ENCODE measurements at regions of chr12 and their contacts with region 1.

Region 1: DNA sequence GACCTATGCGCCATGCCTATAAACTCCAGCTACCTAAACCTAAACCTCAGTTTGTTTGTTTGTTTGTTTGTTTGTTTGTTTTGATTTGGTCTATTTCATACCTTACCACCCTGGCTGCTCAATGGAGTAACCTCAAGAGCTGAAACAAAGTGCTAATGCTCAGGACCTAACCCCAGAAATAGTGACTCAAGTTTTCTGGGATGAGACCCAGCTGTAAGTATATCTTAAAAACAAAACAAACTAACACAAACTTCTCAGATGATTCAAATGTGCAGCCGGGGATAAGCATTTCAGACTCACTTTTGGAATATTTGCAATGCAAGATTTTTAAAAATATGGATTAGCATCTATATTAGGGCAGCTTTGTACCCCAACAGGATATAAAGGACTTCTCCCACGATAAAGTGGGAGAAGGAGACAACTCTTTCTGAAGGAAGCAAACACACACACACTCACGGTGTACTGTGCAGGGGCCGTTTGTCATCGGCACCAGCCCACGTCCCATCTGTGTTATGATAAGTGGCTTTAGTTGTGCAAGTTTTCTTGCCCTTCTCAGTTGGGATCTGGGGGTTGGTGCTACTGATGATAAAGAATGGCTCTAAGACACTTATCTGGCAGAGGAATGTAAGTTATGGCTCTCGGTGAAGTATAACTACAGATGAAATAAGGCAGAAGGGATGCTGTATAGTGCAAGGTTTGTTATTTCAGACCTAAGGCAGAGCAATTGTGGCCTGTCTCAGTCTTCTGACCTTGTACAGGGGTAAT is 516.7 kb upstream of the TMEM132C start:
- DNase-seq: peak in 4 of 10 donors; percentile 60 to 76 (median 67)
- H3K4me3 ChIP-seq: no peak overlapping the region
- H3K27ac ChIP-seq: peak overlapping the region in 26 of 59 donors; percentile 5 to 74 (median 39)
- H3K27me3 ChIP-seq: no peaks in the 10 kb centered on the region
- CTCF ChIP-seq: no peak

Region 2: DNA sequence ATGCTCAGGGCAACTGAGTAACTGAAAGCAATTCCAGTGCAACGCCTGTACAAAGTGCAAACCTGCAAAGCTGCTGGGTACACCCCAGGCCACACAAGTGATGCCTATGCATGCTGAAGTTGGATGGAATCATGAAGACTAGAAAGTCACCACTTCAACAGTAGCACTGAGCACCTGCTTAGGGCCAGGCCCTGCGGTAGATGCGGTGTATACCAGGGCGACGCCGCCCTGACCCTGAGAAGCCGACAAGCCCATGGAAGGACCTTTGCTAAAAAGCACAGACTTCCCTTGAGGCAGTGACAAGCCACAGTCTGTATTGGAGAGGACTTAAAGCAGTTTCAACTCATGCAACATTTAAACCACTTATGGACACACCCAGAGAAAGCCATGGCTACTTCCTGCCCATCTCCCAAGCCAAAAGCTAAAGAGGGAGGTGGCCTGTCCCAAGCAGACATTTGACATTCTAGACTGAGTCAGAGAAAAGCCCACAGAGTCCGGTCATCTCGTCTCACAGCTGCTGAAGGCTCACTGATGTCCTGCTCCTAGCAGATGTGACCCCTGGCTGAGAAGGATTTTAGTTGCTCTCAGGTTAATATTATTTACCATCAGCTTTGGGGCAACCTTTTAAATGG is 327.2 kb before region 1 on chr12:
- intact Hi-C with region 1: no loop called
- DNase-seq: no peak
- H3K4me3 ChIP-seq: no peak overlapping the region
- H3K27ac ChIP-seq: no peak overlapping the region
- H3K27me3 ChIP-seq: peaks cover 0 to 5% (median 0%) of the 10 kb centered on the region in 45 donors
- CTCF ChIP-seq: no peak

Region 3: DNA sequence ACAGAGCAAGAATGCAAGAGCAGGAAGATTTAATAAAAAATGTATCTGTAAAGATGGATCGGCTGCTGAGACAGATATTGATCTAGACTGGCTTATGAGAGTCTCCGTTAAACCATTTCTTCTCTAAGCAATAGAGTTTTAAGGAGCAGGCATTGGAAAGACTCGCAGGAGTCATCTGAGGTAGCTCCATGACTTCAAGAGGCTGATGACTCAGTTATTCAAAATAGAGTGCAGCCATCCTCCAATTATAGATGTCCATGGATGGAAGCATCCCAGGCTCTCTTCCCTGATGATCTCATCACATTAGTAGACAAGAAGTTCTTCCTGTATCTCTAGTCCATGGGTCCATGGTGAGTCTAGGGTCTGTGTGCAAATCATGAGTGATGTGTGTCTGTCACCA is 121.6 kb before region 1 on chr12:
- intact Hi-C with region 1: no loop called
- DNase-seq: peak in 1 of 10 donors; percentile 36
- H3K4me3 ChIP-seq: peak overlapping the region in 1 of 59 donors; percentile 11
- H3K27ac ChIP-seq: peak overlapping the region in 31 of 59 donors; percentile 1 to 71 (median 28)
- H3K27me3 ChIP-seq: peaks cover 0 to 14% (median 0%) of the 10 kb centered on the region in 45 donors
- CTCF ChIP-seq: no peak

Region 4: DNA sequence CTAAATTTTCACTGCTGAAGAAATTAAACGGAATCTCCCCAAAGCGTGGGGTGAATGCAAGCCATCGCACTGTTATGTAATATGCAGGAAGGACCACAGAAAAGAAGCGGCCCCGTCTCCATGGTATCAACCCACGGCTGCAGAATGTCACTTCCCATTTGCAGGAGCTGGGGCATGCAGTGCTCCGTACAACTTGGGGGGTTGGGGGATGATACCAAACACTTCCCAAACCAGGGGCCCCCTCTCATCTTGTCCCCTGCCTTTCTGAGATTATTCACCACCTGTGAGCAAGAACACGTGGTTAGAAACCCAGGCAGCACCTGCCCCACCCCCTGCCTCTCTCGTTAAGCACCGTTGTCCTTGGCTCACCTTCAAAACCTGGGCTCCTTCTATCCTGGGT is 11.6 kb after region 1 on chr12:
- intact Hi-C with region 1: loop called in 1 of 2 experiments (anchors 1 kb)
- DNase-seq: peak in 8 of 10 donors; percentile 32 to 74 (median 68)
- H3K4me3 ChIP-seq: peak overlapping the region in 42 of 59 donors; percentile 4 to 49 (median 28)
- H3K27ac ChIP-seq: peak overlapping the region in 49 of 59 donors; percentile 3 to 87 (median 62)
- H3K27me3 ChIP-seq: no peaks in the 10 kb centered on the region
- CTCF ChIP-seq: no peak

Region 5: DNA sequence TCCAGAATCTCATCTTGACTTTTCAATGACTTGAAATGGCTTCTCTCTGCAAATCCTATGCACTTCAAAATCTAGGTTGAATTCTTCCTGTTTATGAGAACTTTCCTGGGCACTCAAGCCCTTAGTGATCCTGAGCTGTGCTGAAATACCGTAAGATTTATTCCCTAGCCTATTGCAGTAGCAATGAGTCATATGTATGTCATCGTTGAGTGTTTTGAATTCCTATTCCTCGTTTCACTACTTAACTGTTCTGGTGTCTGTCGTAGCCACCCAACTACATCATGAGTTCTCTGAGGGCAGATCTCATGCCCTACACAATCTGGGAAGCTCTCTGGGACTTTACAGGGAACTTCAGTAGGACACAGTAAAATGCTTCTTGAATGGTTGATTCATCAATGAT is 325.9 kb after region 1 on chr12:
- intact Hi-C with region 1: no loop called
- DNase-seq: no peak
- H3K4me3 ChIP-seq: no peak overlapping the region
- H3K27ac ChIP-seq: no peak overlapping the region
- H3K27me3 ChIP-seq: no peaks in the 10 kb centered on the region
- CTCF ChIP-seq: no peak

Measured in dorsolateral prefrontal cortex (tissue), 120 donors.